CD8-positive, alpha-beta T cell (primary cell): ENCODE measurements at regions of chr10 and their contacts with region 1.

Region 1: DNA sequence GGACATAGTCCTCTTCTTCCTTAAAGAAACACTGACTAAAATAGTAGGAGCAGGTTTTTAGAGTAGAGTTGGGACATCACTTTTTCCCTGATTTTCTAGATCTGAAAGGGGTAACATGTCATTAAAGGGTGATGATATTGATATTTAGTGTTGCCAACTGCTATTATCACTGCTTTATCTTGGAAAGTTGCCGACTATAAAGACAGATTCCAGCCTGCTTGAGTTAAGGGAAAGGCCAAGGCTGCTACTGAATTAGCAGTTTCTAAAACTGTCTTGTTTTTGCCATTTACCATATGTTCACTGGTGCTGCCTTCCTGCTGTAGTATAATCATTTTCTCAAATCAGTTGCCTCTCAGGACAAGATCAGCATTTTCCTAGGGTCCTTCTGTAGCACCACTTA is 29.7 kb downstream of the AP3M1 start:
- DNase-seq: no peak
- ATAC-seq: no peak
- H3K4me3 ChIP-seq: no peak overlapping the region
- H3K4me3 Mint-ChIP-seq: no peak overlapping the region
- H3K27ac ChIP-seq: no peak overlapping the region
- H3K27ac Mint-ChIP-seq: peak overlapping the region; percentile 53
- H3K4me1 ChIP-seq: no peaks in the 10 kb centered on the region
- H3K4me1 Mint-ChIP-seq: no peaks in the 10 kb centered on the region
- H3K27me3 ChIP-seq: no peaks in the 10 kb centered on the region
- H3K27me3 Mint-ChIP-seq: no peaks in the 10 kb centered on the region
- CTCF ChIP-seq: no peak

Region 2: GRCh38 chr10:73879296-73880173 is 241.4 kb before region 1 on chr10:
- CTCF ChIA-PET with region 1: no interaction called
- POLR2A ChIA-PET with region 1: no interaction called
- intact Hi-C with region 1: no loop called
- DNase-seq: peak; percentile 86 to 98 (median 95)
- ATAC-seq: peak; percentile 85
- H3K4me3 ChIP-seq: no peak overlapping the region
- H3K4me3 Mint-ChIP-seq: no peak overlapping the region
- H3K27ac ChIP-seq: peak overlapping the region; percentile 19 to 29
- H3K27ac Mint-ChIP-seq: peak overlapping the region; percentile 90
- H3K4me1 ChIP-seq: peaks cover 31% of the 10 kb centered on the region
- H3K4me1 Mint-ChIP-seq: peaks cover 42% of the 10 kb centered on the region
- H3K27me3 ChIP-seq: no peaks in the 10 kb centered on the region
- H3K27me3 Mint-ChIP-seq: no peaks in the 10 kb centered on the region
- CTCF ChIP-seq: peak; percentile 85

Region 3: GRCh38 chr10:74234569-74234968 is 113.7 kb after region 1 on chr10:
- CTCF ChIA-PET with region 1: interaction called, 17 read pairs
- POLR2A ChIA-PET with region 1: no interaction called
- intact Hi-C with region 1: loop called (anchors 2 to 10 kb)
- DNase-seq: peak in 1 of 9 experiments; percentile 29
- ATAC-seq: no peak
- H3K4me3 ChIP-seq: no peak overlapping the region
- H3K4me3 Mint-ChIP-seq: no peak overlapping the region
- H3K27ac ChIP-seq: no peak overlapping the region
- H3K27ac Mint-ChIP-seq: no peak overlapping the region
- H3K4me1 ChIP-seq: no peaks in the 10 kb centered on the region
- H3K4me1 Mint-ChIP-seq: peaks cover 8% of the 10 kb centered on the region
- H3K27me3 ChIP-seq: no peaks in the 10 kb centered on the region
- H3K27me3 Mint-ChIP-seq: no peaks in the 10 kb centered on the region
- CTCF ChIP-seq: peak; percentile 73